Mucosa of descending colon (tissue), 3 donors: ENCODE measurements at regions of chr3 and their contacts with region 1.

Region 1: GRCh38 chr3:46488735-46489361 is 8.9 kb upstream of the RTP3 start:
- DNase-seq: peak; percentile 94 to 99 (median 97)
- ATAC-seq: peak; percentile 97
- H3K4me3 ChIP-seq: no peak overlapping the region
- H3K4me1 ChIP-seq: peaks cover 17% of the 10 kb centered on the region
- CTCF ChIP-seq: peak; percentile 96

Region 2: DNA sequence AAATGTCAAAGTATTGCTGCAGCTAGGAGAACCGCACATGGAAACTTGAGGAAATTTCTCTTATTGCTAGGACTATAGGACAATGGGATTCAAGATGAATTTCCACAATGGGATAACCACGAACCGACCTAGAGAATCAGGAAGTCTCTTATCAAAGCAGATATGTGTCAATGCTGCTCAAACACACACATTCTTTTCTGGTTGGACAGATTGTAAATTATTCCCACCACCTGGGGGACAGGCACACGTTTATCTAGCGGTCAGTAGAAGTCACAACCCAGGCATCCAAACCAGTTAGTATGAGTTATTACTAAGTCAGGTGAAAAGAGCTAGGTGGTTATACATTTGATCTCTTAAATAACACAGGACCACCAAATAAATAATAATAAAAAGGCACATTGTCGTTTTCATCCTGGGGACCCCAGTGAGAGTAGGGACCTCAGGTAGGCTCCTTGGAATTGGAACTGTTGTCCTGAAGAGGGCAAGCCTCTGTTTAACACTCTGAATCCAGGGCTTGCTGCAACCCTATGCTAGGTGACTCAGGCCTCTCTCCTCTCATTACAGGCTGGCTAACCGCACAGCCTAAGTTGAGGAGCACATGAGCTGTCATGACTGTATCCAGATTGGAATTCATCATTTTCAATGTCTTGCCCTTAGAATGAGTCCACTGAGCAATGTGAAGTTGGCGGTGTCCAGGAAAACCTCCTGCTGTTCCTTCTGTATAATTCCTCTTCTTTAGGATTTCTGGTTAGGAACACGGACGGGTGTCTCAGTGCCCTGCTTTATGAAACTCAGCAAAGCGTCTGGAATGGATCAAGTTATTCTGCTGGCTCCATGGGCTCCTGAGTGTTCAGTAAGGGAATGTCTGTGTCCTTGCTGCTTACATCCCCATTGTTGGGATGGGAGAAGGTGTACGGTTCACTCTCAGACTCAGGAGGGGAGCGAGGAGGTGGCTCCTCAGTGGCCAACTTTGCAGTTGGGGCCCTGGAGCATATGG is 1403.7 kb before region 1 on chr3:
- intact Hi-C with region 1: no loop called
- DNase-seq: no peak
- ATAC-seq: no peak
- H3K4me3 ChIP-seq: no peak overlapping the region
- H3K4me1 ChIP-seq: peaks cover 4% of the 10 kb centered on the region
- CTCF ChIP-seq: no peak

Region 3: DNA sequence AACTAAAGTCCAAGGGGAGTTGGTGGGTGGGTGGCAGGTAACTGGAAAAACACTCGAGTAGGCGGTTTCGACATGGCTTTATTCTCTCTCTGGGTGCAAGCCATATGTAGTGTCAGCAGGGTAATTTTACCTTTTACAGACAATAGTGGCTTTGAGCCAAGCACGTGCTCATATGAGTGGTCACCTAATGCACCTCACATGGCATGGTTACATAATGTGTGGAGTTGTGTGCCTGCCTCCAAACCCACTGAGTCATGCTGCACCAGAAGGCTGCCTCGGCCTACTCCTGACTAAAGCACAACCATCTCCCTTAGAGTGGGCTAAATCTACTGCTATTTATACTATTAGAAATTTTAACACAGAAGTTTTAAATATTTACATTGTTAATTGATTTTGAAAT is 65.3 kb before region 1 on chr3:
- intact Hi-C with region 1: no loop called
- DNase-seq: no peak
- ATAC-seq: no peak
- H3K4me3 ChIP-seq: no peak overlapping the region
- H3K4me1 ChIP-seq: peaks cover 5% of the 10 kb centered on the region
- CTCF ChIP-seq: no peak

Region 4: GRCh38 chr3:46558184-46559043 is 69.6 kb after region 1 on chr3:
- intact Hi-C with region 1: loop called in 1 of 2 experiments (anchors 10 kb)
- DNase-seq: peak; percentile 87 to 89 (median 88)
- ATAC-seq: peak; percentile 99
- H3K4me3 ChIP-seq: no peak overlapping the region
- H3K4me1 ChIP-seq: peaks cover 3% of the 10 kb centered on the region
- CTCF ChIP-seq: peak; percentile 52

Region 5: GRCh38 chr3:46629551-46630517 is 141.0 kb after region 1 on chr3:
- intact Hi-C with region 1: loop called (anchors 5 kb)
- DNase-seq: peak; percentile 85 to 90 (median 86)
- ATAC-seq: peak; percentile 95
- H3K4me3 ChIP-seq: no peak overlapping the region
- H3K4me1 ChIP-seq: peaks cover 22% of the 10 kb centered on the region
- CTCF ChIP-seq: peak; percentile 97